ENCODE measurements at regions of chr5 and their contacts with region 1.

Region 1: DNA sequence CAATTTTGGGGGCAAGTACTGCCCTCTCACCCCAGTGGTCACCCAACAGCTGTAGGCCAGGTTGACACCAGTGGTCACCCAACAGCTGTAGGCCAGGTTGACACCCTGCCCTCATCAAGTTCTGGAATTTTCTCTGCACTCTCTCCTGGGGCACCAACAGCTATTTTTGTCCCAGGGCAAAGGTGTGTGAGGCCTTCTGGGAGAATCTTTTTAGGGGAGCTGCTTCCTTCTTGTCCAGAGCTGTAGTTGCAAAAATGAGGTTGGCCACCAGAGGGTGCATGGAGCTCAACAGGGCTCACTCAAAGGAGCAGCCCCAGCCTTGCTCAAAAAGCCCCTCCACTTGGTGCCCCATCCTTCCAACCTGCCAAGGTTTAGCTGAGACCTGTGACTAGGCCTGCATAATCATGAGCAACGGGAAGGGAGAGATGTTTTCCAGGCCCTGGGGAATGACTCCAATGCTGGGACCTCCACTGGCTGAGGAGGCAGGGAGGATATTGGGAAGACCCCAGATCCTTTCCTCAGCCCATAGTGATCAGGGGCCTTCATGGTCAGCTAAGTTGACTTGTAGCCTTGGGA is 10.6 kb upstream of the P4HA2 start:
- DNase-seq: no peak
- H3K4me3 ChIP-seq: no peak overlapping the region
- H3K27ac ChIP-seq: no peak overlapping the region
- H3K27me3 ChIP-seq: no peaks in the 10 kb centered on the region
- CTCF ChIP-seq: peak; percentile 88

Region 2: GRCh38 chr5:132064738-132065331 is 173.4 kb before region 1 on chr5:
- CTCF ChIA-PET with region 1: interaction called, 11 read pairs
- POLR2A ChIA-PET with region 1: no interaction called
- DNase-seq: peak; percentile 43
- H3K4me3 ChIP-seq: no peak overlapping the region
- H3K27ac ChIP-seq: no peak overlapping the region
- H3K27me3 ChIP-seq: peaks cover 4% of the 10 kb centered on the region
- CTCF ChIP-seq: peak; percentile 93

Region 3: GRCh38 chr5:132190161-132190817 is 48.0 kb before region 1 on chr5:
- CTCF ChIA-PET with region 1: interaction called, 29 read pairs
- POLR2A ChIA-PET with region 1: no interaction called
- DNase-seq: peak; percentile 62
- H3K4me3 ChIP-seq: no peak overlapping the region
- H3K27ac ChIP-seq: no peak overlapping the region
- H3K27me3 ChIP-seq: no peaks in the 10 kb centered on the region
- CTCF ChIP-seq: peak; percentile 95

Region 4: GRCh38 chr5:132215329-132215728 is 22.9 kb before region 1 on chr5:
- CTCF ChIA-PET with region 1: interaction called, 84 read pairs
- POLR2A ChIA-PET with region 1: no interaction called
- DNase-seq: peak; percentile 88
- H3K4me3 ChIP-seq: no peak overlapping the region
- H3K27ac ChIP-seq: peak overlapping the region; percentile 57
- H3K27me3 ChIP-seq: no peaks in the 10 kb centered on the region
- CTCF ChIP-seq: no peak

Region 5: GRCh38 chr5:132251220-132251725 is 13.0 kb after region 1 on chr5:
- CTCF ChIA-PET with region 1: interaction called, 112 read pairs
- POLR2A ChIA-PET with region 1: no interaction called
- DNase-seq: no peak
- H3K4me3 ChIP-seq: no peak overlapping the region
- H3K27ac ChIP-seq: no peak overlapping the region
- H3K27me3 ChIP-seq: no peaks in the 10 kb centered on the region
- CTCF ChIP-seq: no peak

Region 6: GRCh38 chr5:132272311-132273210 is 34.3 kb after region 1 on chr5:
- CTCF ChIA-PET with region 1: interaction called, 13 read pairs
- POLR2A ChIA-PET with region 1: no interaction called
- DNase-seq: no peak
- H3K4me3 ChIP-seq: no peak overlapping the region
- H3K27ac ChIP-seq: no peak overlapping the region
- H3K27me3 ChIP-seq: no peaks in the 10 kb centered on the region
- CTCF ChIP-seq: peak; percentile 85

Region 7: DNA sequence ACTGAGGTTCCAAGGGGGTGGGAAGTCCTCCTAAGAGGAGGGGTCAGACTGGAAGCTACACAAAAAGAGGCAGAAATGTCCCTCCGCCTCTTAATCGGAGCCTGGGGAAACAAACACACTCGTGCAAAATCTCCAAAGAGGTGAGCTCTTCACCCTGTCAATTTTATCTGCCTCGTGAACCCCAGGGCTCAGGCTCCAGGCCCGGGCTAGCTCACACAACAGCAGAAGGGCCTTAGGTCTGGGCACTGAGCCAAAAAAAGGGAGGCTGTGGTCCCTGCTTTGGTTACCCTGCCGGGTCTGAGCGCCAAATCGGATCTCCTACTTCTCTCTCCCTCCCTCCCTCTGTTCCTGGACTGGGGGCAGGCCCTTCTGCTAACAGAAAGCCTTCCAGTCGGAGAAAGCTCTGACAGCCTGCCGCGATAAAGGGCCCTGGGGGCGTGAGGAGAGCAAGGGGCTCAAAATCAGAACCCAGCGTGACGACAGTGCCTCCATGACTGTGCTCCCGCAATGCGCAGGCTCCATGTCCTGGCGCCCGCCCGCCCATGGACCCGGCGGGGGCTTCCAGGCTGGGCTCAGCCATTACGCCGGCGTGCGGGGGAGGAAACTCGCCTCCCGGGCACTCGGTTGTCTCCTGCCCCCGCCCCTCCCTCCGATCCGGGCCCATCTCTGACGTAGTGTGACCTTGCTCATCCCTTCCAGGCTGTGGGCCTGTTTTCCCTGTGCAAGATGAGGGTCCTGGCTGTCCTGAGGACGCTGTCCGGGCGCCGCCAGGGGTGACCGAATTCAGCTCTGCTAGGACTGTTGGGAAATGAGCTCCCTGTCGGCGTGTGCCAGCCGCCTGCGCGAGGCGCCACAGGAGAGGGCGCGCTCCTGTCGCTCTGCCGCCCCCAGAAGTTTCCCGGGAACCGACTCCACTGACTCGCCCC is 55.1 kb after region 1 on chr5:
- CTCF ChIA-PET with region 1: interaction called, 15 read pairs
- POLR2A ChIA-PET with region 1: interaction called, 3 read pairs
- DNase-seq: peak; percentile 66
- H3K4me3 ChIP-seq: peak overlapping the region; percentile 82
- H3K27ac ChIP-seq: peak overlapping the region; percentile 99
- H3K27me3 ChIP-seq: no peaks in the 10 kb centered on the region
- CTCF ChIP-seq: peak; percentile 18; the same call in 1 of the 2 replicates